ENCODE measurements at regions of chr10 and their contacts with region 1.

Region 1: DNA sequence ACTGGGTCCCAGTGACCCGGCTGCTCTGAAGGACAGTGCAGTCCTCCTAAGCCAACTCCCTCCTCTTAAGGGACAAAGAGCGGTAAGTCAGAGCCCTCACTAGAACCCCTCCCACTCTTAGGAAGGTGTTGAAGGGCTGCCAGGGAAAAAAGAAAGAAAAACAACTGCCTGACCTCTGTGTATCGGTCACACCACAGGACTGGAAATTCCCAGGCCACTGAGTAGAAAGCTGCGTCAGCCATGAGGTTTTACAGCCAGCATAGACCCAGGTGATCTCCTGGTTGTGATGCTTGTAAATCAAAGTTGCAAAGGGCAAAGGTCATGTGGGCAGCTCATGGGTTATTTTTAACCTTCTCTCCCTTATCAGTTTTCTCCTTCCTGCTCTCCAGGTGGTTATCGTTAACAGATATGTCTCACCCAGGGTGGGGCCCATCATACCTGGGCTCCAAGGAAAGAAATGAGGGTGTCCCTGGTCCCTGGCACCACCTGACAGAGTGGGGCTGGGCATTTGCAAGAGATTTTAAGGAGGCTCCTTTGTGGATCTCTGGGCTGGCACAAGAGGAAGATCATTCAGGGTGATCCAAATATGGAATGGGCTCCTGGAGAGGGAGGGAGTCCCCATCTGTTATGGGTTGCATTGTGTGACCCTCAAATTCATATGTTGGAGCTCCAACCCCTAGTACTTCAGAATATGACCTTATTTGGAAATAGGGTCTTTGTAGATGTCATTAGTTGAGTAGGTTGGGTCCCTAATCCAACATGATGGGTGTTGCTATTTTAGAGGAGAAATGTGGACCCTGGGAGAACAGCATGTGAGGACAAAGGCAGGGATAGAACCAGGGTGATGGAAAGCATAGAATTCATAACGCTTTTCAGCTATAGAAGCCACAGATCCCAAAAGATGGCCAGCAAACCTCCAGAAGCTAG is 91.3 kb upstream of the SMNDC1 start:
- DNase-seq: peak; percentile 99
- H3K4me3 ChIP-seq: no peak overlapping the region
- H3K27ac ChIP-seq: peak overlapping the region; percentile 91
- H3K4me1 ChIP-seq: peaks cover 58% of the 10 kb centered on the region
- H3K27me3 ChIP-seq: no peaks in the 10 kb centered on the region
- CTCF ChIP-seq: no peak
- POLR2A ChIP-seq: peak; percentile 24

Region 2: DNA sequence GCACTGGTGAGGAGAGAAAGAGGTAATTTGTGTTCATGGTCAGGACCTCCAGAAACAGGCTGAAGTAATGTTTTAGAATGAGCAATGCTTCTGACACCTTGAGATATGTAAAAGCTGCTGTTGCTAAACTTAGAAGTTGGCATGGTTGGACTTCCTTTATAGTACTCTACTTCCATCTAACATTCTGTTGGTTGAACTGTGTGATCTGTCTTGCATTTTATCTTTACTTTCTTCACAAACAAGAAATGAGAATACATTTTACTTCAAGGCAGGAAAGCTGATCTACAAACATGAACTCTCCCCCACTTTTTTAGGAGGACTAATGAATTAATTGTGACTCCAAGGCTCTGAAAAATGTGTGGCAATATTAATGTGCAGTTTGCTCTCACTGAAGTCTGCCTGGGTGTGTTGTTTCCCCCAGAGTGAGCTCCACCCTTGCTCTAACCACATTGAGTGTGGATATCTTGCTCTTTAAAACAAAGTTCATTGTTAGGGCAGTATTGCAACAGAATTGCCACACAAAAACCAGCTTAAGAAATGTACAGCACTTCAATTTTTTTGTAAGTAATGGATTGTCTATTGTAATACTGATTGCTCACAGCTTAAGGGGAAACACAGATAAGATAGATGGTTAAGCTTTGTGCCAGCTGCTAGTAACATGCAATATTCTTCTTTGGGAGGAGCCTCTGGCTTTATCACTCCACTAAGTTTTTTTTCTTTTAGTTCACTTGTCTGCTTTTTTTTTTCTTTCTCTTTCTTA is 319.2 kb before region 1 on chr10:
- CTCF ChIA-PET with region 1: no interaction called
- POLR2A ChIA-PET with region 1: no interaction called
- dilution Hi-C with region 1: no loop called
- intact Hi-C with region 1: loop called (anchors 5 kb)
- DNase-seq: peak; percentile 91
- H3K4me3 ChIP-seq: peak overlapping the region in 1 of 3 experiments; percentile 23
- H3K27ac ChIP-seq: peak overlapping the region; percentile 83
- H3K4me1 ChIP-seq: peaks cover 53% of the 10 kb centered on the region
- H3K27me3 ChIP-seq: no peaks in the 10 kb centered on the region
- CTCF ChIP-seq: no peak
- POLR2A ChIP-seq: no peak

Region 3: DNA sequence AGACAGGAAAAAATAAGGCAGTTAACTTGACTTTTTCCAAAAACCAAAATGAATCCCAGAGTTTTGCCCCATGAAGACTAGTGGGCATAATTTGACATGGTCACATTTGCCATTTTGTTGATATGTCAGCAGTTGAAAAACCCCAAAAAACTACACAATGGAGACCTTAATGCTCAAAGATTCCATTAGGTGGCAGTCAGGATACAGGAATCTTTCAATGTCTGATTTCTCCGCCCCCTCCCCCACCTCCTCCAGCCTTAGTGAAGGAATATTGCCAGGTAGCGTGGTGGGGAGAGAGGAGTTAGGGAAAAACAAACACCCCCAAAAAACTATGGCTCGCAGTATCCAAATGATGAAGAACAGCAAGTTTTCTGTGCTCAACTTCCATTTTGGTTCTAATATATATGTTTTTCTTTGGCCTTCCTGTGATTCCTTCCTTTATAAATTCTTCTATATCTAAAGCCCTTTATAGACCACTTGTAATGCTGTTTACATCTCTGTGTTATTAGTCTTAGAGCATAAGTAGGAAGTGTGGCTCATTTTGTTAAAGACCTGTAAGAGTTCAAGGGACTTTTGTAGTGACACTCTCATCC is 84.5 kb before region 1 on chr10:
- CTCF ChIA-PET with region 1: interaction called, 3 read pairs
- POLR2A ChIA-PET with region 1: no interaction called
- dilution Hi-C with region 1: no loop called
- intact Hi-C with region 1: loop called (anchors 1 kb)
- DNase-seq: peak; percentile 65
- H3K4me3 ChIP-seq: peak overlapping the region in 1 of 3 experiments; percentile 33
- H3K27ac ChIP-seq: peak overlapping the region; percentile 72
- H3K4me1 ChIP-seq: peaks cover 47% of the 10 kb centered on the region
- H3K27me3 ChIP-seq: no peaks in the 10 kb centered on the region
- CTCF ChIP-seq: peak; percentile 54 to 55
- POLR2A ChIP-seq: no peak

Region 4: GRCh38 chr10:110414563-110415309 is 18.7 kb after region 1 on chr10:
- CTCF ChIA-PET with region 1: interaction called, 16 read pairs
- POLR2A ChIA-PET with region 1: no interaction called
- dilution Hi-C with region 1: no loop called
- intact Hi-C with region 1: loop called (anchors 1 kb)
- DNase-seq: no peak
- H3K4me3 ChIP-seq: no peak overlapping the region
- H3K27ac ChIP-seq: peak overlapping the region; percentile 8
- H3K4me1 ChIP-seq: peaks cover 39% of the 10 kb centered on the region
- H3K27me3 ChIP-seq: no peaks in the 10 kb centered on the region
- CTCF ChIP-seq: no peak
- POLR2A ChIP-seq: no peak

Region 5: DNA sequence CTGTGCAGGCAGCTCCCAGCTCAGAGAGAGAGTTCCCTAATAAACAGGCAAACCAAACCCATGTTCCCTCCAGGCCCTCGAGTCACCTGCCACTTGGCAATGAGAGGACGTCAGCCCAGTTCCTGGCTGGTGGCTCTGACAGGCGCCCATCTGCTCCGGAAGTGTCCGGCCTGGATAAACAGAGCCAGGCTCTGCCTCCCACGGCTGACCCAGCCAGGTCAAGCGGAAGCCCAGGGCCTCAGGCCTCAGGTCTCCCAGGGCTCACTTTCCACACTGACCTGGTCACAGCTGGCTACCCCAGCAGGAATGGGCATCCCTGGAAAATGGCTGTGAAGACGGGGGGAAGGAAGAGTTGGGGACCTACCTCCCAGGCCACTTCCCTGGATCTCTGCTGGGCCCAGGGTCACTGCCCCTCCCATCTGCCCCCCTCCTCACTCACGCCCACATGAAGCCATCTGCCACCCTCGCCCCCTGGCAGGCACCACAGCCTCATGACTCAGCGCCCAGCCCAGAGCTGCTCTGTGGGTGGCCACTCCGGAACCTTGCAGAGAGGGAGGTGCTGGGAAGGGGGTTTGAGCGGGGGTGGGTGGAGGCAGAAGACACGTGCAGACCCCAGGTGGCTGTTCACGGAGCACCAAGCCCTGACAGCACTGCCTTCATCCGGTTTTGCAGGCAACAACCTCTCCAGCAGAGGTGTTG is 64.3 kb after region 1 on chr10:
- CTCF ChIA-PET with region 1: no interaction called
- POLR2A ChIA-PET with region 1: no interaction called
- dilution Hi-C with region 1: no loop called
- intact Hi-C with region 1: loop called (anchors 1 kb)
- DNase-seq: peak; percentile 55
- H3K4me3 ChIP-seq: no peak overlapping the region
- H3K27ac ChIP-seq: peak overlapping the region; percentile 66
- H3K4me1 ChIP-seq: peaks cover 29% of the 10 kb centered on the region
- H3K27me3 ChIP-seq: no peaks in the 10 kb centered on the region
- CTCF ChIP-seq: no peak
- POLR2A ChIP-seq: no peak

Region 6: GRCh38 chr10:110528224-110528997 is 132.4 kb after region 1 on chr10:
- CTCF ChIA-PET with region 1: no interaction called
- POLR2A ChIA-PET with region 1: no interaction called
- dilution Hi-C with region 1: no loop called
- intact Hi-C with region 1: loop called (anchors 1 kb)
- DNase-seq: no peak
- H3K4me3 ChIP-seq: no peak overlapping the region
- H3K27ac ChIP-seq: peak overlapping the region; percentile 90
- H3K4me1 ChIP-seq: peaks cover 55% of the 10 kb centered on the region
- H3K27me3 ChIP-seq: no peaks in the 10 kb centered on the region
- CTCF ChIP-seq: no peak
- POLR2A ChIP-seq: no peak

Region 7: DNA sequence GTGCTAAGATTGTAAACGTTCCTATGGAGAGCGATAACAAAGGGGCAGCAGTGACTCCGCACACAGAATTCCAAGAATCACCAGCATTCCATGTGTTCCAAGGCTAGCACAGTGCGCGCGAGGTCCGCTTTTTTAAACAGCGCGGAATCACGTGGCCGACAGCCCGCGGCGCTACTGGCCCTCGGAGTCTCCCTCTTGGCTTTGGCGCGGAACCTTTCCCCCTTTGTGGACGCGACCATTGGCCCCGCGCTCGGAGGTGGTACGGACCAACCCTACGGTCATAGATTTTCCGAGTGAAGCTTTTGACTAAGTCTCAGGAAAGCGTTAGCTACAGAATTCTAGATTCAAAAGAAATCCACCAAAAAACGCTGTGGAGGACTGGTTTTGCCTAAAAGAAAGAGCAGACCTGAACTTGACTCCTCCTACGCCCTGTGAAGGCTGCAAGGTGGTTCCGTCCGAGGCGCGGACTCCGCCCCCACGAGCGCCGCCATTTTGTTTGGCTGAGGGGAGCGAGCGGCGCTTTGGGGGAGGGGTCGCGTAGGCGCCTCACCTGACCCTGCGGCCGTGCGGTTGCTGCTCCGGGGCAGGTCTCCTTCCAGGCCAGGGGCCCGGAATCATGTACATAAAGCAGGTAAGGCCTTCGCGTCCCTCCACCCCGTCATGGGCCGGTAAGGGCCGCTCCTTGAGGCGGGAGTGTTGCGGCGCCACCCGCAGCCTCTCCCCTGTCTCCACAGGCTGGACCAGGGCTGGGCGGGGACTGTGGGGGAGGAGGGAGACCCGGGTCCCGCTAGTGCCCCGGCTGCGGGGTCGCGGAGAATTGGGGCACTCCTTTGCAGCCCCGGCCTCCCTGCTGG is 171.4 kb after region 1 on chr10 and contains the start of gene SMC3:
- CTCF ChIA-PET with region 1: no interaction called
- POLR2A ChIA-PET with region 1: no interaction called
- dilution Hi-C with region 1: no loop called
- intact Hi-C with region 1: loop called (anchors 1 kb)
- DNase-seq: peak; percentile 96
- H3K4me3 ChIP-seq: peak within 1 kb of the TSS; percentile 65 to 95 (median 90)
- H3K27ac ChIP-seq: peak within 1 kb of the TSS; percentile 96
- H3K4me1 ChIP-seq: peaks cover 14% of the 10 kb centered on the region
- H3K27me3 ChIP-seq: peaks cover 0 to 1% of the 10 kb centered on the region in 2 experiments
- CTCF ChIP-seq: no peak
- POLR2A ChIP-seq: peak; percentile 61
- total RNA-seq, gene SMC3: 44.2 and 45.0 TPM in 2 replicates

Measured in endothelial cell of umbilical vein (primary cell).